BJ (cell line): ENCODE measurements at regions of chr7 and their contacts with region 1.

Region 1: GRCh38 chr7:34091323-34091917 is 186.1 kb downstream of the BMPER start:
- DNase-seq: no peak
- H3K4me3 ChIP-seq: no peak overlapping the region
- H3K27me3 ChIP-seq: no peaks in the 10 kb centered on the region
- CTCF ChIP-seq: peak; percentile 52

Region 2: GRCh38 chr7:33982425-33982786 is 109.0 kb before region 1 on chr7:
- CTCF ChIA-PET with region 1: interaction called, 130 read pairs
- POLR2A ChIA-PET with region 1: no interaction called
- DNase-seq: no peak
- H3K4me3 ChIP-seq: no peak overlapping the region
- H3K27me3 ChIP-seq: no peaks in the 10 kb centered on the region
- CTCF ChIP-seq: peak; percentile 70

Region 3: DNA sequence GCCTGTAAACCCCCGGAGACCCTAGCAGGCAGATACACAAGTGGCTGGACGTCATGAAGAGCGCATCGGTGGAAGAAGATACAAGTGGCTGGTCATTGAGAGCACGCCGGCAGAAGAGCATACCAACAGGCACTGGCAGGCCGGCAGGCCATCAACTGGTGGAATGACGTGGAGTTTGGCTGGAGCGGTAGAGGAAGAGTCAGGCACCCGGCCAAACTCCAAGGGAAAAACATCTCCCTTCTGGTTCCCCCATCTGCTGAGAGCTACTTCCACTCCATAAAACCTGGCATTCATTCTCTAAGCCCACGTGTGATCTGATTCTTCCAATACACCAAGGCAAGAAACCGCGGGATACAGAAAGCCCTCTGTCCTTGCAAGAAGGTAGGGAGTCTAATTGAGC is 453.2 kb after region 1 on chr7:
- CTCF ChIA-PET with region 1: no interaction called
- POLR2A ChIA-PET with region 1: no interaction called
- DNase-seq: no peak
- H3K4me3 ChIP-seq: no peak overlapping the region
- H3K27me3 ChIP-seq: no peaks in the 10 kb centered on the region
- CTCF ChIP-seq: no peak